Calu3 (cell line): ENCODE measurements at regions of chr15 and their contacts with region 1.

Region 1: DNA sequence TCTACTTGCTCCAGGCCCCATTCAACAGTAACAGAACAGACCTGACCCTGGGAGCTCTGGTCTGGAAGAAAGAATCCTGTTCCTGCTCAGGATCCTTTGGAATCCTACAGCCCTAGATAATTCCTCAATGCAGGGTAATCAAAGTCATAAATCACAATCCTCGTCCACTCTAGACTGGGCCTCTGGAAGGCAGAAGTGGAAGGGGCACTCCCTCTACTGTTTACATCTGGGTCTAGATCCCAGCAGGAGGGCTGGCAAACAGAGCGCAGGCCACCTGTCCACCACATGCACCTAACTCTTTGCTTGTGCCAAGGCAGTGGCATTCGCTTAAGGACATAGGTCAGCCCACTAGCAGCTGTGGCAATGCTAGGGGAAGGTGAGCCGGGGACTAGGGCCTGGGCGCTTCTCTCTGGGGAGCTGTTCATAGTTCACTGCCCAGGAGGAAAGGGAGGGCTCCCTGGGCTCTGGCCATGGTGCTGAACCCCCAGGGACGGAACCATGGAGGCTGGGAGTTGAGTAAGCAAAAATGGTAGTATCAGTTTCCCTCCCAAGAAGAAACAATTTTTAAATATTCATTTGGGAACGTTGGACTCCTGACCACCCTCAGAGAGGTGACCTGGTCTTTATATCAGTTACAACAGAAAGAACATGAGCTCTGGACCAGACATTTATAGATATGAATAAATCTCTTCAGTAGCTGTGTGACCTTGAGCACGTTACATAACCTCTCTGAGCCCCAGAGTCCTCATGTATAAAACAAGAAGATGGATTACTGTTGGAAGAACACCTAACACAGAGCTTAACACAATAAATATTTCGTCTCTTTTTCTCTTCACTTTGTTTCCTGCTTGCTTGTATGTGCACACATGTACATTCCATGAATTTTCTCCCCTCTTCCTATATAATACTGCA is 90.2 kb downstream of the NTRK3 start:
- DNase-seq: peak; percentile 23
- H3K4me3 Mint-ChIP-seq: no peak overlapping the region
- H3K27ac Mint-ChIP-seq: no peak overlapping the region
- H3K4me1 Mint-ChIP-seq: no peaks in the 10 kb centered on the region
- H3K27me3 Mint-ChIP-seq: peaks cover 64% of the 10 kb centered on the region
- CTCF ChIP-seq: no peak

Region 2: GRCh38 chr15:86701620-86701980 is 1464.7 kb before region 1 on chr15:
- CTCF ChIA-PET with region 1: interaction called, 12 read pairs
- intact Hi-C with region 1: no loop called
- DNase-seq: no peak
- H3K4me3 Mint-ChIP-seq: no peak overlapping the region
- H3K27ac Mint-ChIP-seq: no peak overlapping the region
- H3K4me1 Mint-ChIP-seq: no peaks in the 10 kb centered on the region
- H3K27me3 Mint-ChIP-seq: no peaks in the 10 kb centered on the region
- CTCF ChIP-seq: no peak

Region 3: GRCh38 chr15:87582169-87582568 is 584.2 kb before region 1 on chr15:
- CTCF ChIA-PET with region 1: interaction called, 15 read pairs
- intact Hi-C with region 1: no loop called
- DNase-seq: no peak
- H3K4me3 Mint-ChIP-seq: no peak overlapping the region
- H3K27ac Mint-ChIP-seq: no peak overlapping the region
- H3K4me1 Mint-ChIP-seq: no peaks in the 10 kb centered on the region
- H3K27me3 Mint-ChIP-seq: no peaks in the 10 kb centered on the region
- CTCF ChIP-seq: no peak

Region 4: GRCh38 chr15:88126695-88127431 is 39.5 kb before region 1 on chr15:
- CTCF ChIA-PET with region 1: no interaction called
- intact Hi-C with region 1: no loop called
- DNase-seq: no peak
- H3K4me3 Mint-ChIP-seq: no peak overlapping the region
- H3K27ac Mint-ChIP-seq: no peak overlapping the region
- H3K4me1 Mint-ChIP-seq: no peaks in the 10 kb centered on the region
- H3K27me3 Mint-ChIP-seq: peaks cover 22% of the 10 kb centered on the region
- CTCF ChIP-seq: no peak

Region 5: GRCh38 chr15:88142121-88142520 is 24.2 kb before region 1 on chr15:
- CTCF ChIA-PET with region 1: no interaction called
- intact Hi-C with region 1: loop called (anchors 1 kb)
- DNase-seq: no peak
- H3K4me3 Mint-ChIP-seq: no peak overlapping the region
- H3K27ac Mint-ChIP-seq: no peak overlapping the region
- H3K4me1 Mint-ChIP-seq: no peaks in the 10 kb centered on the region
- H3K27me3 Mint-ChIP-seq: peaks cover 14% of the 10 kb centered on the region
- CTCF ChIP-seq: no peak